ENCODE measurements at regions of chr5 and their contacts with region 1.

Region 1: DNA sequence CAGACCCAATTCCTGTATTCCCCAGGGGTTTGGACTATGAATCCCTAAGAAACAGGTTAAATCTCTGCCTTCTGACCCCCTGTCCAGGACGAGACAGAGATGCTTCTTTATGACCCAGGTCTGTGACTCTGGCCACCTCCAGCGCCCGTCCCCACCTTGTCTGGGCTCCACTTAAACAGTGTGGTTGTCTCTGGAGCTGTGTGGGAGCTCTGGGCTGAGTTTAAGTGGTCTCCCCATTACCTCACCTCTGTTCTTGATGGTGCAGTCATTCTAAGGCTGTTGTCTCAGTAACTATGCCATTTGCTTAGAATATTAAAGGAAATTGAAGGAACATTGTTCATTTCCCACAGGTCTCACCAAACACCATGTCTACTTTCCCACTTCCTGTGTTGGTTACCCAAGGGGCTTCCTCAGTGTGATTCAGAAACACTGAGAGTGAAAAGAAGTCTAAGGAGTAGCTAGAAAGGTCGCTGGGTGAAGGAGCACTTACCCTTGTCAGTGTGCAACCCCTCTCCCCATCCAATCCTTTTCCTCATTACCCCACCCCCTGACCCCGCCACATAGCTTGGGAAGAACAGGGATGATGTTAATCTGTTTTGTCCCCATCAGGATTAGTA is 127.8 kb upstream of the CKMT2 start:
- DNase-seq: peak in 2 of 14 experiments; percentile 6 to 7
- ATAC-seq: no peak
- H3K4me3 ChIP-seq: no peak overlapping the region
- H3K4me3 Mint-ChIP-seq: no peak overlapping the region
- H3K27ac ChIP-seq: peak overlapping the region in 1 of 2 donors; percentile 9
- H3K27ac Mint-ChIP-seq: peak overlapping the region; percentile 11
- H3K4me1 ChIP-seq: peaks cover 13% of the 10 kb centered on the region
- H3K4me1 Mint-ChIP-seq: peaks cover 37% of the 10 kb centered on the region
- H3K27me3 ChIP-seq: no peaks in the 10 kb centered on the region
- H3K27me3 Mint-ChIP-seq: no peaks in the 10 kb centered on the region
- CTCF ChIP-seq: no peak

Region 2: DNA sequence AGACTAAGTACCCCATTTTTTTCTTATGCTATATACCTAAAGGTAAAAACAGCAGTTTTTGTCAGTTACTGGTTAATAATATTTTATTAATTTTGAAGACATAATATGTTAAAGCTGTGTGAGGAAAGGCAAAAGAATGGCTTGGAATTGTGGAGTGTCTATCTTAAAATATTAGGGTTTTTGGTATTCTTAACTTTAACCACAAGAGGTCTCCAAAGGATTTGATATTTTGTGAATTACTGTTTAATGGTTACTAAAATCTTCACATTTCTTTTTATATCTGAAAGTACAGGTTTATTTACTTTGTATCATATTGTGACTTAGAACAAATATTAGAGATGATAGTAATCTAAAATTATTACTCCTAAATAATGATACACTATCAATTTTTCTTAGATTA is 418.6 kb before region 1 on chr5:
- CTCF ChIA-PET with region 1: interaction called, 10 read pairs
- POLR2A ChIA-PET with region 1: interaction called, 3 read pairs
- intact Hi-C with region 1: loop called (anchors 2 to 5 kb)
- DNase-seq: peak in 3 of 14 experiments; percentile 29 to 52 (median 32)
- ATAC-seq: no peak
- H3K4me3 ChIP-seq: no peak overlapping the region
- H3K4me3 Mint-ChIP-seq: no peak overlapping the region
- H3K27ac ChIP-seq: no peak overlapping the region
- H3K27ac Mint-ChIP-seq: no peak overlapping the region
- H3K4me1 ChIP-seq: no peaks in the 10 kb centered on the region
- H3K4me1 Mint-ChIP-seq: peaks cover 22% of the 10 kb centered on the region
- H3K27me3 ChIP-seq: no peaks in the 10 kb centered on the region
- H3K27me3 Mint-ChIP-seq: no peaks in the 10 kb centered on the region
- CTCF ChIP-seq: peak; percentile 27

Region 3: GRCh38 chr5:80754900-80755299 is 350.5 kb before region 1 on chr5:
- CTCF ChIA-PET with region 1: no interaction called
- POLR2A ChIA-PET with region 1: no interaction called
- intact Hi-C with region 1: loop called in 1 of 2 experiments (anchors 5 kb)
- DNase-seq: peak in 4 of 14 experiments; percentile 5 to 46 (median 16)
- ATAC-seq: no peak
- H3K4me3 ChIP-seq: no peak overlapping the region
- H3K4me3 Mint-ChIP-seq: peak overlapping the region; percentile 72
- H3K27ac ChIP-seq: no peak overlapping the region
- H3K27ac Mint-ChIP-seq: peak overlapping the region; percentile 73
- H3K4me1 ChIP-seq: peaks cover 13% of the 10 kb centered on the region
- H3K4me1 Mint-ChIP-seq: peaks cover 69% of the 10 kb centered on the region
- H3K27me3 ChIP-seq: no peaks in the 10 kb centered on the region
- H3K27me3 Mint-ChIP-seq: no peaks in the 10 kb centered on the region
- CTCF ChIP-seq: no peak

Region 4: GRCh38 chr5:80804332-80804731 is 301.0 kb before region 1 on chr5:
- CTCF ChIA-PET with region 1: no interaction called
- POLR2A ChIA-PET with region 1: no interaction called
- intact Hi-C with region 1: loop called (anchors 5 to 10 kb)
- DNase-seq: peak in 1 of 14 experiments; percentile 5
- ATAC-seq: no peak
- H3K4me3 ChIP-seq: no peak overlapping the region
- H3K4me3 Mint-ChIP-seq: no peak overlapping the region
- H3K27ac ChIP-seq: no peak overlapping the region
- H3K27ac Mint-ChIP-seq: no peak overlapping the region
- H3K4me1 ChIP-seq: no peaks in the 10 kb centered on the region
- H3K4me1 Mint-ChIP-seq: no peaks in the 10 kb centered on the region
- H3K27me3 ChIP-seq: no peaks in the 10 kb centered on the region
- H3K27me3 Mint-ChIP-seq: no peaks in the 10 kb centered on the region
- CTCF ChIP-seq: no peak

Region 5: GRCh38 chr5:80935811-80936385 is 169.5 kb before region 1 on chr5:
- CTCF ChIA-PET with region 1: interaction called, 3 read pairs
- POLR2A ChIA-PET with region 1: interaction called, 3 read pairs
- intact Hi-C with region 1: loop called in 1 of 2 experiments (anchors 2 kb)
- DNase-seq: peak in 3 of 14 experiments; percentile 14 to 26 (median 17)
- ATAC-seq: no peak
- H3K4me3 ChIP-seq: no peak overlapping the region
- H3K4me3 Mint-ChIP-seq: no peak overlapping the region
- H3K27ac ChIP-seq: no peak overlapping the region
- H3K27ac Mint-ChIP-seq: no peak overlapping the region
- H3K4me1 ChIP-seq: peaks cover 4% of the 10 kb centered on the region
- H3K4me1 Mint-ChIP-seq: peaks cover 8% of the 10 kb centered on the region
- H3K27me3 ChIP-seq: no peaks in the 10 kb centered on the region
- H3K27me3 Mint-ChIP-seq: no peaks in the 10 kb centered on the region
- CTCF ChIP-seq: peak; percentile 11

Region 6: DNA sequence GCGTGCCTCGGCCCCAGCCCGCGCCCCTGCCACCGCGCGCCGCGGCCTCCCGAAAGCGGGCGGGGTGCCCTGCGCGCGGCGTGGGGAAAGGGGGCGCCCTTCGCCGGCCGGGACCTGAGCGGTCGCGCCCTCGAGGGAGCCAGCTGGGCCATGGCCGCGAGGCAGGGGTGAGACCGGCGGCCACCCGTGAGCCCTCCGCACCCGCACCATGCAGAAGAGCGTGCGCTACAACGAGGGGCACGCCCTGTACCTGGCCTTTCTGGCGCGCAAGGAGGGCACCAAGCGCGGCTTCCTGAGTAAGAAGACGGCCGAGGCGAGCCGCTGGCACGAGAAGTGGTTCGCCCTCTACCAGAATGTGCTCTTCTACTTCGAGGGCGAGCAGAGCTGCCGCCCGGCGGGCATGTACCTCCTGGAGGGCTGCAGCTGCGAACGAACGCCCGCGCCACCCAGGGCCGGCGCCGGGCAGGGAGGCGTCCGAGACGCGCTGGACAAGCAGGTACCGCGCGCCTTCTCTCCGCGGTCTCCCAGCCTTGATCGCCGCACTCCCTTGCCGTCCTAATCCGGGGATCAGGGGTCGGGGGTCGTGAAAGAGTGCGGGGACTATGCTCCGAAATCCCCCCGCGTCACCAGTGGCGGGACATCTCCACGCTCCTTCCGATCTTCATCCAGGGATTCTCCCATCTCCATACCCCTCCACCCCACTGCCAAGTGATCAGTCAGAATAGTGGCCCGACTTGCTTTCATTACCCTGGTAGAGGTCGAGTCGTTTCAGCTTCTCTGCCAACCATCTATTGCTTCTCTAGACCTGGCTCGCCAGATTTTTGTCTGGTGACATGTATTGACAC is 144.6 kb before region 1 on chr5:
- CTCF ChIA-PET with region 1: interaction called, 10 read pairs
- POLR2A ChIA-PET with region 1: interaction called, 3 read pairs
- intact Hi-C with region 1: loop called (anchors 2 to 5 kb)
- DNase-seq: peak; percentile 27 to 79 (median 46)
- ATAC-seq: peak; percentile 25
- H3K4me3 ChIP-seq: peak overlapping the region; percentile 84
- H3K4me3 Mint-ChIP-seq: peak overlapping the region; percentile 93
- H3K27ac ChIP-seq: peak overlapping the region in 1 of 2 donors; percentile 43
- H3K27ac Mint-ChIP-seq: peak overlapping the region; percentile 88
- H3K4me1 ChIP-seq: peaks cover 31% of the 10 kb centered on the region
- H3K4me1 Mint-ChIP-seq: peaks cover 77% of the 10 kb centered on the region
- H3K27me3 ChIP-seq: no peaks in the 10 kb centered on the region
- H3K27me3 Mint-ChIP-seq: no peaks in the 10 kb centered on the region
- CTCF ChIP-seq: no peak

Region 7: GRCh38 chr5:81117566-81117965 is 12.2 kb after region 1 on chr5:
- CTCF ChIA-PET with region 1: interaction called, 13 read pairs
- POLR2A ChIA-PET with region 1: no interaction called
- intact Hi-C with region 1: no loop called
- DNase-seq: no peak
- ATAC-seq: no peak
- H3K4me3 ChIP-seq: no peak overlapping the region
- H3K4me3 Mint-ChIP-seq: no peak overlapping the region
- H3K27ac ChIP-seq: no peak overlapping the region
- H3K27ac Mint-ChIP-seq: no peak overlapping the region
- H3K4me1 ChIP-seq: no peaks in the 10 kb centered on the region
- H3K4me1 Mint-ChIP-seq: peaks cover 26% of the 10 kb centered on the region
- H3K27me3 ChIP-seq: no peaks in the 10 kb centered on the region
- H3K27me3 Mint-ChIP-seq: no peaks in the 10 kb centered on the region
- CTCF ChIP-seq: no peak